Left lung (tissue), 14 donors: ENCODE measurements at regions of chr18 and their contacts with region 1.

Region 1: DNA sequence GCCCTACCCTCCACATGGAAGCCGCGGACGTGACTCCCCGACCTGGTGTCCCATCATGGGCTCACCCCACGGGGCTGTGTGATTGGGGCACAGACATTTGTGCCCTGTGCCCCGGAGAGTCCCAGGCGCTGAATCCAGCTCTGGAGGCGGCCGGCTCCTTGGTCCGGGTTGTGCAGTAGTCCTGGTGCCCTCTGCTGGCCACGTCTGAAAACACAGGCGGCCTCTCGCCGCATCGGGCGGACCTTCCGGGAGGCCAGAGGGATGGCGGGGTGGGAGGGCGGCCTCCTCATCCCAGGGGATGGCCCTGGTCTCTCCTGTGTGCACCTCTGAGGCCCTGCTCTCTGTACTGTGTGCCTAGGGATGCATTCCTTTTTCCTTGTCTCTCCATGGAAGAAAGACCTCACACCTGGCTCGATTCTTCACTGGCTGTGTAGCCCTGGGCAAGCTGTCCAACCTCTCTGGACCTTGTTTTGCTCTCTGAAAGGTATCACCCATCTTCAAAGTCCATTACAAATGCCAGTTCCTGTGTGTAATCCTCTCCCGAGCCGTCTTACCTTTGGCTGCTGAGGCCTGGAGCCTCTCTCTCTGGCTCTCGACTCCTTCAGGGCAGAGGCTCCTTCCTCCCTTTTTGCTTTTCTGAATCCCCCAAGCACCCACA is 27.6 kb downstream of the CELF4 start:
- DNase-seq: peak; percentile 62 to 89 (median 74)
- ATAC-seq: peak; percentile 93
- H3K4me3 ChIP-seq: no peak overlapping the region
- H3K27ac ChIP-seq: no peak overlapping the region
- H3K4me1 ChIP-seq: no peaks in the 10 kb centered on the region
- H3K27me3 ChIP-seq: peaks cover 11 to 50% of the 10 kb centered on the region in 2 donors
- CTCF ChIP-seq: peak; percentile 79 to 83

Region 2: DNA sequence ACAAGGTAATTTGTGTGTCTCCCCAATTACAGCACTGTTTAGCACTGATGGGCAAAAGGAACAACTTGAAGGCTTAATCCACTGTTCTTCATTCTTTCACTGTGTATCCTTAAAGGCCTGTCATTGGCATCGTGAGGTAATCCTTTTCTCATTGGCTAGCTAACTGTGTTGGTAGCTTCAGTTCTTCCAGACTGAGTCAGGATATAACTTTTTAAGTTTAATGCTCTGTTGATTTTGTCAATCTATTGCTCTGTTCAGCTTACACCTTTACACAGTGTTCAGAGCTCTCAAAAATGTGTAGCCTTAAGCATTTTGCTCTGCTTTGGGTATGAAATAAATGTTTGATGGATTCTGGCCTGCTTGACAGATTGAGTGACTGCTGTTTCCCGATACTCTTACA is 560.9 kb before region 1 on chr18:
- intact Hi-C with region 1: no loop called
- DNase-seq: no peak
- ATAC-seq: no peak
- H3K4me3 ChIP-seq: no peak overlapping the region
- H3K27ac ChIP-seq: no peak overlapping the region
- H3K4me1 ChIP-seq: no peaks in the 10 kb centered on the region
- H3K27me3 ChIP-seq: no peaks in the 10 kb centered on the region
- CTCF ChIP-seq: no peak

Region 3: DNA sequence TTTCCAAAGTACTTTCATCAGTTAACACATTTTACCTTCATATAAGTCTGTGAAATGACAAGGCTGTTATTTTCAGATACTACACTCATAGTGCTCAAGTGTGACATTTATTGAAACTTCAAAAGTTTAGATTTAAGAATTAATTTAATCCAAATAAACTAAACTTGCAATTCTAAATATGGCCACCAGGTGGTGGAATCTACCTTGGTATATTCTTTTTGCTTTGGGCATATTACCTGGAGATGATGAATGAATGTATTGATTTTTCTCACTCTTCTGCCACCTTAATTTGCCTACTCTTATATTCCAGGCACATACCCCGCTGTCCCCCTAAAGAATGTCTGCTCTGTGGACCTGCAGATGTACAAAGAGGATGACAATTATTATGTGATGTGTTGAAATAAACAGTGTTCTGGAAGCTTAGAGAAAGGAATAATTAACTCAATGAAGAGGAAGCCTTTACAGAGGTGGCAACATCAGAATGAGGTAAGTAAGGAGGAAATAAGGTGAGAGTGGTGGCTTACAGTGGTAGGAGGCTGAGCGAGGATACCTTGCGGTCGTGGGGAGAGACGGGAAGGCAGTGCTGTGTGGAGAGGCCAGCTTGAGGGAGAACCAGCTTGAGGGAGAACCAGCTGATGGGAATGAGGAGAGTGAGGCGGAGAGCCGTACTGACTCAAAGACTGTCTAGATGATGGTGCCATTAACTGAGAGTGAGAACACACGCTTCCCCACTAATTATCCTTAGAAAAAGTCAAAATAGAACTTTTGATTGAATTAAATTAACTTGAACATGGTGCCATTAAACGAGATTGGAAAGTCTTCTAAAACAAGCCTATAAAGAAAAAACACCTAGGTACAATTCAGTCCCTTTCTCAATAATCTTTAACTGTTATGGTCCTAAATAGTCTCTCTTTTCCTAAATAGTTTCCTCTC is 151.9 kb before region 1 on chr18:
- intact Hi-C with region 1: loop called in 1 of 2 experiments (anchors 5 kb)
- DNase-seq: no peak
- ATAC-seq: no peak
- H3K4me3 ChIP-seq: no peak overlapping the region
- H3K27ac ChIP-seq: no peak overlapping the region
- H3K4me1 ChIP-seq: no peaks in the 10 kb centered on the region
- H3K27me3 ChIP-seq: peaks cover 0 to 24% of the 10 kb centered on the region in 2 donors
- CTCF ChIP-seq: peak; percentile 49 to 71

Region 4: DNA sequence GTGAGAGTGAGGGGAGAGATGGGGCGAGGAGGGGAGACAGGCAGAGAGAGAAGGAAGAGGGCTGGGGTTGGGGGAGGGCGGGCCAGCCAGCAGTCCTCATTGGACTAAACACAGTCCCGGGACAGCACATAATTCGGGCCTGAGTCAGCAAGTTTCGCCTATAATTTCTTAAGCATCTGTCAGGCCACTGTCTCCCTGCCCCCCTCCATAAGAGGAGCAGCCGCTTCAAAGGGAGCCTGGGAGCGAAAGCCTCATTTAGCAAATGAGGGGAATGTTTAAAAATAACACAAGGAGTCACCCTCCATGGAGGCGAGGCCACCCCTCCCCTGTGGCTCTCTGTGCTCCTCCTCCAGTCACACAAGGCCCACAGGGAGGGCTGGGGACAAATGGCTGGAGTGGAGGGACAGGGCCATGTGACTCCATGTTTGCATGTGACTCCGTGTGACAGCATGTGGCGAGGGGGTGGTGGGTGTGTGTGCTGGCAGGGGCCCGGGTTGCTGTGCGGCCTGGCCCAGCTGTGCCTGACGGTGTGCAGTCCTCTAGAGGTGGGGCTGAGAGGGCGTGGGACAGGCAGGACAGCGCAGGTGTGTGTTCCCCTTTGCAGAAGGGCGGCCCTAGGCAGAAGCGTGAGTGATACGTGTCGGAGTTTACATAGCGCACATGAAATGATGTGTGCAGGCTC is 134.8 kb before region 1 on chr18:
- intact Hi-C with region 1: no loop called
- DNase-seq: peak in 3 of 4 donors; percentile 64 to 94 (median 81)
- ATAC-seq: peak; percentile 82
- H3K4me3 ChIP-seq: no peak overlapping the region
- H3K27ac ChIP-seq: no peak overlapping the region
- H3K4me1 ChIP-seq: no peaks in the 10 kb centered on the region
- H3K27me3 ChIP-seq: no peaks in the 10 kb centered on the region
- CTCF ChIP-seq: no peak

Region 5: GRCh38 chr18:37445368-37445767 is 92.6 kb before region 1 on chr18:
- intact Hi-C with region 1: loop called in 1 of 2 experiments (anchors 10 kb)
- DNase-seq: no peak
- ATAC-seq: no peak
- H3K4me3 ChIP-seq: no peak overlapping the region
- H3K27ac ChIP-seq: no peak overlapping the region
- H3K4me1 ChIP-seq: no peaks in the 10 kb centered on the region
- H3K27me3 ChIP-seq: peaks cover 0 to 17% of the 10 kb centered on the region in 2 donors
- CTCF ChIP-seq: no peak